Activated naive CD4-positive, alpha-beta T cell treated with anti-CD3 and anti-CD28 coated beads for 36 hours (primary cell): ENCODE measurements at regions of chr13 and their contacts with region 1.

Region 1: DNA sequence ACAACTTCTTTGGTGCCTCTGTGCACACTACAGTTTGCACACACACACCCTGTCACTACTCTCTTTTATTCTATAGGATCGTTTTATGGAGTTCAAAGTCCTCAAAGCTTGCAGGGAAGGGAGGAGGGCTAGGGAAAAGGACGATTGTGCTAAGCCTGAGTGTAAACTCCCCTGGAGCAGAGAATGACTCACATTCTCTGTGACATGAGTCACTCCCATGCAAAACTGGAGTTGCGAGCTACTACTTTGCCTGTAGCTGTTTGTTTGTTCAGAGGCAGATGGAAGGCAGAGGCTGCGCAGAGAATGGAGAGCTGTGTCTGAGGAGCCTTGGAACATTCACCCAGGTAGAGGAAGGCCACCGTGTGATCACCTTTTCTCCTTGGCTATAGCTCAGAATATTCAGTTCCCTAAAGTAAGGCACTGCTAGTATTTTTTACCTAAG is 80.5 kb upstream of the MBNL2 start:
- DNase-seq: peak; percentile 57
- H3K4me3 Mint-ChIP-seq: no peak overlapping the region
- H3K27ac Mint-ChIP-seq: no peak overlapping the region
- H3K4me1 Mint-ChIP-seq: peaks cover 11% of the 10 kb centered on the region
- H3K27me3 Mint-ChIP-seq: peaks cover 12% of the 10 kb centered on the region

Region 2: DNA sequence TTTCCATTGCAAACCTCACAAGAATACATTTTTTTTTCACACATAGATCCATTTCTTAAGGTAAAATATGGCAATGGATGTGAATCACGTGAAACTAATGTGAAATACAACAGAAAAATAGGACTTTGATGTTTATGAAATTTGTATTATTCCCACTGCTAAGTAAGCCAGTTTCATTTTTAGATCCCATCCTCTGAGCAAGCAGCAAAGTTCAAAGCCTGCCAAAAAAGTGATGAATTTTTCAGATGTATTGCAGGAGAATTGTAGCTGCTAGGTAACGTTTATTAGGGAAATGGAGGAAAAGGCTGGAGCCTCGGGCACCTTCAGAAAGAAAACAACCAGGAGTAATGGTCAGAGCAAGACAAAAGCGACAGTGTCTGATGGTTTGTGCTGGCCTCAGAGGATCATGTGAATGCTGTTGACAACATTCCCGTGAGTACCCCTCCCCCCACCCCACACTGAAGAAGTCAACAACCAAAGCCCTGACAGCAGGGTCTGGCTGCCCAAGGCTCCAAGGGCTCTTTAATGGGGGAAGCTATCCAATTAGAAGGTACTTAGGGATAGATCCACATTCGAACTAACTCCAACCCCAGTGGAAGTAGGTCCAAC is 242.8 kb before region 1 on chr13:
- CTCF ChIA-PET with region 1: no interaction called
- intact Hi-C with region 1: no loop called
- DNase-seq: no peak
- H3K4me3 Mint-ChIP-seq: no peak overlapping the region
- H3K27ac Mint-ChIP-seq: no peak overlapping the region
- H3K4me1 Mint-ChIP-seq: no peaks in the 10 kb centered on the region
- H3K27me3 Mint-ChIP-seq: peaks cover 2% of the 10 kb centered on the region

Region 3: DNA sequence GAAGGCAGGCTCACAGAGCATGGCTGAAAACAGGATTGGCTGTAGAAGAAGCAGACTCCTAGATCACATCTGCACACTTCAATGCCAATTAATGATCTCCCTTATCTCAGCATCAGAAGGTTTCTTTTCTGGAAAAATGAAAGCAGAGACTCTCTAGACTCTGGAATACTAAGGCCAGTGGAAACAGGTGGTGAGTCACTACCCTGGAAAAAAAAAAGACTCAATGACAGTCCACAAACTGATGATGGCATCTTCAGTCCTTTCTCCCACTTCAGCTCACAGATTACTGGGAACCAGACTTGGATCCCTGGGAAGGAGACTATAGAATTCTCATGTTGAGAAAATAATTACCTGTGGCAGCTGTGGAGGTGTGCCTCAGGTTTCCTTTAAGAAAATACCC is 33.1 kb after region 1 on chr13:
- CTCF ChIA-PET with region 1: no interaction called
- intact Hi-C with region 1: loop called (anchors 2 kb)
- DNase-seq: no peak
- H3K4me3 Mint-ChIP-seq: no peak overlapping the region
- H3K27ac Mint-ChIP-seq: no peak overlapping the region
- H3K4me1 Mint-ChIP-seq: no peaks in the 10 kb centered on the region
- H3K27me3 Mint-ChIP-seq: peaks cover 4% of the 10 kb centered on the region

Region 4: DNA sequence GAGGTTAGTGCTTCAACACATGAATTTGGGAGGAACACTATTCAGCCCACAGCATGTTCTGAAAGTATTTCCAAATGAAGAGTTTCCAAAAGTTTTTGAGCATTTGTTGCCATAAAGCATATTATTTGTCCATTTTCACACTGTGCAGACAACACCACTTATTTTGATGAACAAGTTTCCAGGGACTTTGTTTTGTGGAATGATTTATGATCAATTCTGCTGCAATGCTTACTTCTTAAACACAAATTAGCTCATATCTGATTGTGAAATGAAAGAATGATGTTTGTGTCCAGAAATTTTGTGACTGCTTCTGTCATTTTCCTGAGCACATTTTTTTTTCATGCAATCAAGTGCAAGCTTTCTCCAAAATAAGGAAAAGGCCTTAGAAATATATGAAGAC is 497.7 kb after region 1 on chr13:
- CTCF ChIA-PET with region 1: no interaction called
- intact Hi-C with region 1: no loop called
- DNase-seq: no peak
- H3K4me3 Mint-ChIP-seq: no peak overlapping the region
- H3K27ac Mint-ChIP-seq: no peak overlapping the region
- H3K4me1 Mint-ChIP-seq: no peaks in the 10 kb centered on the region
- H3K27me3 Mint-ChIP-seq: no peaks in the 10 kb centered on the region